Activated CD4-positive, alpha-beta memory T cell treated with anti-CD3 and anti-CD28 coated beads for 36 hours (primary cell): ENCODE measurements at regions of chr14 and their contacts with region 1.

Region 1: GRCh38 chr14:91866061-91866460 is 1.3 kb downstream of the TC2N start:
- DNase-seq: peak; percentile 73
- H3K4me3 Mint-ChIP-seq: peak overlapping the region; percentile 87
- H3K27ac Mint-ChIP-seq: peak overlapping the region; percentile 94
- H3K4me1 Mint-ChIP-seq: peaks cover 92% of the 10 kb centered on the region
- H3K27me3 Mint-ChIP-seq: no peaks in the 10 kb centered on the region

Region 2: DNA sequence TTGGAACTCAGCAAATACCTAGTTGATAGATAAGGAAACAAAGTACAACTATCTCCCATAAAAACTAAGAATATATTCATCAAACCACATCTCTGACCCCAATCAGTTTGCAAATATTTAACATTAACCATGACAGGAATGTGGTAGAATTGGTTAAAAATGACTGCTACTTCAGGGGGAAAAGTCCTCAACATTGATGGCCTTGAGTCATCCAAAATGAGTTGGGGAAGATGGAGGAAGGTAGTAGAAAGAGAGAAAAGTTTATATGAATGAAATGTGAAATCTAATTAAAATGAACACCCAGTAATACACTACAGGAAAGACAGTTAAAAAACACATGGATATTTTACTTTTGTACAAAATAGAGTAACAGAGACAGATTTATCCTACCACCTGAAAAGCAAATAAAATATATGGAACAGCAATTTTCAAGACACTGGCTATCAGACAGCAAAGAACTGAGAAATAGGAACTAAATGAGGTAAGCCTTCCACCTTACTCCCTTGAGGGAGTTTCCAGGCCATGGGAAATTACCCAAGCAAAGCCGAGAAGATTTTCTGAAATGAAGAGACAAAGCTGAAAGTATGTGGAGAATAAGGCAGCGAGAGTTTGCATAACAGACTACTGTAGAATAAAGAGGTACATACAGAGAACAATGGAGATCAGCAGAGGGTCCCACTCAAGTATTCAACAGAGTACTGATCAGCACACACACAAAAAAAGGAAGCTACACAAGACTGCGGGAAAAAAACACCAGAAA is 48.3 kb before region 1 on chr14:
- CTCF ChIA-PET with region 1: no interaction called
- POLR2A ChIA-PET with region 1: no interaction called
- intact Hi-C with region 1: loop called (anchors 2 kb)
- DNase-seq: peak; percentile 51
- H3K4me3 Mint-ChIP-seq: peak overlapping the region; percentile 40
- H3K27ac Mint-ChIP-seq: peak overlapping the region; percentile 85
- H3K4me1 Mint-ChIP-seq: peaks cover 65% of the 10 kb centered on the region
- H3K27me3 Mint-ChIP-seq: no peaks in the 10 kb centered on the region

Region 3: DNA sequence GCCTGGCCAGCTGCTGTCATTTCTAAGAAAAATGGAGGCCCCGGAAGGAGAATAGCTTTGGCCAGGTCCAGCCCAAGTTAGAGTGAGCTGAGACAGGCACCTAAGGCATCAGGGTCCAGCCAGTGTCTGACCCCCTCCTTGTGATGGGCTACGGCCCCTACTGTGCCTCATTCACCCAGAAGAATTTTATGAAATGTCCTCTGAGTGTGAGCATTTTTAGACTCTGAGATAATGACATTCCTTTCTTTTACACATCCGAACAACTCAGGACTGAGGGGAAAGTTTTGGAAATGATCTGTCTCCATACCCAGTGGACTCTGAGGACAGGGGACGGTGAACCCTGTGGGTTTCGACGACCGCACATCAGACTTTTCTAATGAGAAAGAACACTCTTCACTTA is 507.3 kb after region 1 on chr14:
- CTCF ChIA-PET with region 1: no interaction called
- POLR2A ChIA-PET with region 1: no interaction called
- intact Hi-C with region 1: no loop called
- DNase-seq: no peak
- H3K4me3 Mint-ChIP-seq: no peak overlapping the region
- H3K27ac Mint-ChIP-seq: no peak overlapping the region
- H3K4me1 Mint-ChIP-seq: no peaks in the 10 kb centered on the region
- H3K27me3 Mint-ChIP-seq: peaks cover 2% of the 10 kb centered on the region